Psoas muscle (tissue), 8 donors: ENCODE measurements at regions of chr7 and their contacts with region 1.

Region 1: GRCh38 chr7:28582226-28582625 is 169.9 kb downstream of the CREB5 start:
- DNase-seq: no peak
- ATAC-seq: no peak
- H3K4me3 ChIP-seq: no peak overlapping the region
- H3K27ac ChIP-seq: no peak overlapping the region
- H3K4me1 ChIP-seq: no peaks in the 10 kb centered on the region
- H3K27me3 ChIP-seq: no peaks in the 10 kb centered on the region
- CTCF ChIP-seq: no peak

Region 2: DNA sequence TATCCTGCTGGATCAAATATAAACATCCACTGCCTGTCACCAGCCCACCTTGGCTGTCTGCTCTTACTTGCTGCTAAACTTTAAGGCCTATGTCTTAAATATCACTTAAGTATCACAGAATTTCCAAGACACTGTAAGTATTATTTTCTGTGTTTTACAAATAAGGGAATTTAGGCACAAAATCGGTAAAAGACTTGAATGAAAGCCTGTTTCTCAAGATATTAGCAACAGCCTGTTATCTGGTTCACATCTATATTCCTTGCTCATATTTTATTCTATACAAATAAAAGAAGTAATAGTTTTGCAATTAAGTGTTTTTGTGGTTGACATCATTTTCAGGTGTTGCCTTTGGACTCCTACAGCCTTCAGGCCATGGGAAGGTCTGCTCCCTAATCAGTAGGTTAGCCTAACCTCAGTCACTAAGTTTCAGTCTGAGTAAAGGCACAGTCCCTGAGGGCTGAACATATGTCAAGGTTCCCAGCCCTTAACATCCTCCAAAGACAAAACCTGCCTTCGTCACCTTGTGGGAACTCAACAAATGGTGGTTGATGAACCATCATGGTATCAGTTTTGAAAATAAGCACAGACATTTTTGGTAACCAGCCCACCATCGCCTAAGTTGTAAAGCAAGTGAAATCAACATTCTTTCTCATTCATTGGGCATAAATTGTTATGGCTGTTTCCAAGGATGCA is 42.8 kb before region 1 on chr7:
- intact Hi-C with region 1: no loop called
- DNase-seq: no peak
- ATAC-seq: no peak
- H3K4me3 ChIP-seq: no peak overlapping the region
- H3K27ac ChIP-seq: no peak overlapping the region
- H3K4me1 ChIP-seq: no peaks in the 10 kb centered on the region
- H3K27me3 ChIP-seq: no peaks in the 10 kb centered on the region
- CTCF ChIP-seq: no peak

Region 3: DNA sequence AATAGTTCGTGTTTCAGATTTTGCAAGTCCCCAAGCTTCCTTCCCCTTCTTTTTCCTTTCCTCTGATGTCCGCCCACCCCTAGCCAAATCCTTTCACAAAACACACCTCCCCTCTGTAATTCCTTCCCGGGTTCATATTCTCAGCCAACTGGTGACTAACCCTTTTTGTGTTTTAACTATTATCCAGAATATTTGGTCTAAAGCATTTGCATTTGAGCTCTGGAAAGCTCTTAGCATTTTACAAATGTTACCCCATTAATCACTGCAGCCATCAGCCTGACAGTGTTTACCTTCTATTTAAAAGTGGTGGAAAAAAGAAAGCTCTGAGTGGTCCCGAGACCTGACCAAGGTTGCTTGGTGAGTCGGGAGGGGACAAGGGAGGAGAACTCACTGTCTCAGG is 30.9 kb before region 1 on chr7:
- intact Hi-C with region 1: loop called in 1 of 2 experiments (anchors 2 kb)
- DNase-seq: no peak
- ATAC-seq: no peak
- H3K4me3 ChIP-seq: no peak overlapping the region
- H3K27ac ChIP-seq: no peak overlapping the region
- H3K4me1 ChIP-seq: no peaks in the 10 kb centered on the region
- H3K27me3 ChIP-seq: no peaks in the 10 kb centered on the region
- CTCF ChIP-seq: no peak